Heart right ventricle (tissue), 16 donors: ENCODE measurements at regions of chr1 and their contacts with region 1.

Region 1: GRCh38 chr1:175274368-175274767 is 81.8 kb upstream of the KIAA0040 start:
- DNase-seq: no peak
- ATAC-seq: no peak
- H3K4me3 ChIP-seq: no peak overlapping the region
- H3K27ac ChIP-seq: no peak overlapping the region
- H3K4me1 ChIP-seq: peaks cover 0 to 36% (median 12%) of the 10 kb centered on the region in 9 donors
- H3K27me3 ChIP-seq: no peaks in the 10 kb centered on the region
- CTCF ChIP-seq: no peak

Region 2: DNA sequence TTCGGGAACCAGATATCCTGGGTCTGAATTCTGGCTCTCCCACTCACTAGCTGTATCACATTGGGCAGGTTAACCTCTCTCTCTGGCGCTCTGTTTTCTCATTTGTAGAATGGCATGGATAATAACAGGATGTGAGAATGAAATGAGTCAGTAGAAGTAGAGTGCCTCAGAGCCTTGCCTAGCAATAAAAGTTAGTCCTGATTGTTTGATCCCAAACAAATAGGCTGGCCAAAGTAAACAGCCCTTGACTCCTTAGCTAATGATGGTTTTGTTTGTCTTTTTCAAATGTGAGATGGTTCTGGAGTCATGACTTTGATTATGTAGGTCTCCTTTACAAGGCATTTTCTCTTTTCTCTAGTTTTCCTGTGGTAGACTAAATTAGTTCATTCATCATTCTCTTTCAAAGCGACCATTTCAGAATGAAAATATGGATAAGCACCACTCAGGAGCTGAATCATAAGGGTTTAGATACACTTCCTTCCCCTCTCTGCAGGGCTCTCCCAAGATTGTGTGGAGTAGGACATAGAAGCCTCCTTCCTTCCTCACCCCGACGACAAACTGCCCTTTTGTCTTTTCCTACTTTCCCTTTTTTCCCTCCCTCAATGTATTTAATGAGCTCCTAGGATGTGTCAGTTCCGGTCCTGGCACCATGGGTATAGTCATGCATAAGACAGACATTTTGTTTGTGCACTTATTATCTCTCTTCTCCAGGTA is 104.9 kb before region 1 on chr1:
- intact Hi-C with region 1: loop called in 1 of 10 experiments (anchors 5 kb)
- DNase-seq: no peak
- ATAC-seq: peak in 1 of 8 donors; percentile 26
- H3K4me3 ChIP-seq: no peak overlapping the region
- H3K27ac ChIP-seq: peak overlapping the region in 1 of 10 donors; percentile 12
- H3K4me1 ChIP-seq: peaks cover 3 to 35% (median 16%) of the 10 kb centered on the region in 9 donors
- H3K27me3 ChIP-seq: no peaks in the 10 kb centered on the region
- CTCF ChIP-seq: no peak

Region 3: GRCh38 chr1:175221666-175222175 is 52.6 kb before region 1 on chr1:
- intact Hi-C with region 1: loop called in 1 of 10 experiments (anchors 10 kb)
- DNase-seq: peak in 1 of 2 donors; percentile 43
- ATAC-seq: peak; percentile 48 to 82 (median 66)
- H3K4me3 ChIP-seq: no peak overlapping the region
- H3K27ac ChIP-seq: peak overlapping the region in 7 of 10 donors; percentile 8 to 71 (median 48)
- H3K4me1 ChIP-seq: peaks cover 17 to 48% (median 39%) of the 10 kb centered on the region in 9 donors
- H3K27me3 ChIP-seq: no peaks in the 10 kb centered on the region
- CTCF ChIP-seq: peak in 7 of 9 donors; percentile 29 to 58 (median 41)